Posterior vena cava (tissue), 2 donors: ENCODE measurements at regions of chr20 and their contacts with region 1.

Region 1: DNA sequence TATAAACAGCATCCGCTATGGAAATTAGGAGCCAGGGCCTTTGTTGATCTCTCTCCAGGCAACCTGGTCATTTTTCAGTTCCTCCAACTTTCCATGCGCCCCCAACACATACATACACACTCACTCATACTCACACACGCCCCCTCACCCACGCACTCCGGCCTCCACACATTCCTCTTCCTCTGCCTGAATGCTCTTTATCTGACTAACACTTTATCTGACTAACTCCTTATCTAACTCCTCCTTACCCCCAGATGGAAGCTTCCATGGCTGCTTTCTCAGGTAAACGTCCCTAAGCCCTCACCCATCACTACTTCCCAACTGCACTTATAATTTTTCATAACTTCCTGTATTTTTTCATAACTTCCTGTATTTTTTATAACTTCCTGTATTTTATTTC is 17.4 kb downstream of the CASS4 start:
- DNase-seq: no peak

Region 2: DNA sequence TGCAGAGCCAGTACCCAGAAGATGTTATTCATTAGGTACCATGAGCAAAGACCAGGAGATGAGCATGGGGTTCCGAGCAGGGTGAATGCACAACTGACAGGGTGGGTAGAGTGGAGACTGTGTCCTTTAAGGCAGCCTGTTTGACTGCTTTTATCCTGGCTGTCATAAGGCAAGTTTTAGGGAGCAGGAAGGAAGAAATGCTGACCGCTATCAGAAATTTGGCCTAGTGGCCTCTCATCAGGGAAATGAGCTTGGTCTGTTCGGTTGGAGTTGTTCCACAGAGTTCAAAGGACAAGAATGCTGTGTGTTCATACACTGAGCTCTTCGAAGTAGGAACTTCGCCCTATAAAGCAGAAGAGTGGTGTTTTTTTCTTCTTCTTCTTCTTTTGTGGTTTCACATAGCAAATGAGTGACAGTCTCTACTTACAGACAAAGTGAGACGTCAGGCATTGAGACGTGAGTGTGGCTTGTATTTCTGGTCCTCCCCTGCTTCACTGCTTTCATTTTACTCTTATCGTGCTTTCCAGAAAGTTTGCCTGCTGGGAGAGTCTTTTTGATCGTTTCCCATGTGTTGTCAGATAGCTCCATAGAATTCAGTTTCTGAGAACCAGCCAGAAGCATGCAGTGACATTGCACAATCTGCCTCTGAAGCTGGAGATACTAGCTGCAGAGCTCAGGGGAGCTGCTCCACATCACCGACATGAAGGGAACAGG is 17.6 kb before region 1 on chr20 and contains the start of gene CASS4:
- intact Hi-C with region 1: no loop called
- DNase-seq: no peak
- total RNA-seq, gene CASS4: 1.2 to 2.1 TPM

Region 3: GRCh38 chr20:57038608-57039440 is 609.3 kb after region 1 on chr20:
- intact Hi-C with region 1: loop called in 1 of 2 experiments (anchors 5 kb)
- DNase-seq: no peak